ENCODE measurements at regions of chr11 and their contacts with region 1.

Region 1: DNA sequence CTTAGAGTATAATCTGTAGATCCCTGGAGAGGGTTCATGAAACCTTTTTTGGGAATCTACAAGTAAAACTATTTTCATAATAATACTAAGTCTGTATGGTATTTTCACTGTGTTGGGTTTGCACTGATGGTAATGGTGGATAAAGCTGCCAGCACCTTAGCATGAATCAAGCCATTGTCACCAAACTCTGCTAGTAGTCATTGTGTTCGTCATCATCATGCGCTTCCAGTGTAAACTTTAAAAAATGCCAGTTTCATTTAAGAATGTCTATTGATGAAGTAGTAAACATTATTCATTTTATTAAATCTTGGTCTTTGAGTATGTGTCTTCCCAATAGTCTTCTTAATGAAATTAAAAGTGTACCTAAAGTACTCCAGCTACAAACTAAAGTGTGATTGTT is 15.0 kb downstream of the ALKBH3 start:
- DNase-seq: no peak
- ATAC-seq: no peak
- H3K4me3 ChIP-seq: no peak overlapping the region
- H3K27ac ChIP-seq: no peak overlapping the region
- H3K4me1 ChIP-seq: no peaks in the 10 kb centered on the region
- H3K27me3 ChIP-seq: no peaks in the 10 kb centered on the region
- CTCF ChIP-seq: no peak

Region 2: GRCh38 chr11:43905813-43906241 is 10.2 kb after region 1 on chr11:
- CTCF ChIA-PET with region 1: no interaction called
- POLR2A ChIA-PET with region 1: no interaction called
- in situ Hi-C with region 1: no loop called
- intact Hi-C with region 1: no loop called
- DNase-seq: no peak
- ATAC-seq: no peak
- H3K4me3 ChIP-seq: no peak overlapping the region
- H3K27ac ChIP-seq: no peak overlapping the region
- H3K4me1 ChIP-seq: no peaks in the 10 kb centered on the region
- H3K27me3 ChIP-seq: no peaks in the 10 kb centered on the region
- CTCF ChIP-seq: no peak

Region 3: GRCh38 chr11:44036811-44037657 is 141.4 kb after region 1 on chr11:
- CTCF ChIA-PET with region 1: interaction called, 7 read pairs
- POLR2A ChIA-PET with region 1: no interaction called
- in situ Hi-C with region 1: no loop called
- intact Hi-C with region 1: loop called (anchors 1 kb)
- DNase-seq: peak; percentile 22
- ATAC-seq: peak; percentile 95
- H3K4me3 ChIP-seq: no peak overlapping the region
- H3K27ac ChIP-seq: no peak overlapping the region
- H3K4me1 ChIP-seq: no peaks in the 10 kb centered on the region
- H3K27me3 ChIP-seq: no peaks in the 10 kb centered on the region
- CTCF ChIP-seq: peak; percentile 84